ENCODE measurements at regions of chr7 and their contacts with region 1.

Region 1: DNA sequence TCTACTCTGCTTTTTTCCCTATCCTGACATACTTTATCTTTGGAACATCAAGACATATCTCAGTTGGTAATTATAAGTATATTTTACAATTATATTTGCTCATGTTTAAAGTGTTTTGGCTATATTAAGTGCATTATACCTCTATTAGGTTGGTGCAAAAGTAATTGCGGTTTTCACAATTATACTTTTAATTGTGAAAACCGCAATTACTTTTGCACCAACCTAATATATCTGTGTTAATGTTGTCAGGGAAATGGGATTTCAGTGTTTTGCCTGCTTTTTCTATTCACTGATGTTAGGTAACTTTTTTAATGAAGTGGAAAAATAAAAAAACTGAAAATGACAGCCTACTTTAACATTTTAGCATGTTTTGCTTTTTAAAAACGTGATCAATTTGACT is 11.6 kb downstream of the SLC26A4 start:
- DNase-seq: no peak
- H3K4me3 ChIP-seq: no peak overlapping the region
- H3K27ac ChIP-seq: no peak overlapping the region
- H3K4me1 ChIP-seq: no peaks in the 10 kb centered on the region
- H3K27me3 ChIP-seq: no peaks in the 10 kb centered on the region
- CTCF ChIP-seq: no peak

Region 2: GRCh38 chr7:107353701-107354100 is 318.5 kb before region 1 on chr7:
- CTCF ChIA-PET with region 1: no interaction called
- dilution Hi-C with region 1: no loop called
- in situ Hi-C with region 1: no loop called
- intact Hi-C with region 1: no loop called
- DNase-seq: no peak
- H3K4me3 ChIP-seq: no peak overlapping the region
- H3K27ac ChIP-seq: no peak overlapping the region
- H3K4me1 ChIP-seq: peaks cover 4% of the 10 kb centered on the region
- H3K27me3 ChIP-seq: no peaks in the 10 kb centered on the region
- CTCF ChIP-seq: no peak

Region 3: GRCh38 chr7:107711301-107711700 is 39.1 kb after region 1 on chr7:
- CTCF ChIA-PET with region 1: no interaction called
- dilution Hi-C with region 1: loop called (anchors 5 kb)
- in situ Hi-C with region 1: no loop called
- intact Hi-C with region 1: no loop called
- DNase-seq: peak; percentile 31
- H3K4me3 ChIP-seq: no peak overlapping the region
- H3K27ac ChIP-seq: no peak overlapping the region
- H3K4me1 ChIP-seq: peaks cover 18% of the 10 kb centered on the region
- H3K27me3 ChIP-seq: no peaks in the 10 kb centered on the region
- CTCF ChIP-seq: no peak